Activated CD8-positive, alpha-beta T cell treated with anti-CD3 and anti-CD28 coated beads for 36 hours (primary cell): ENCODE measurements at regions of chr2 and their contacts with region 1.

Region 1: GRCh38 chr2:236180831-236181453 is 12.8 kb upstream of the GBX2 start:
- DNase-seq: peak; percentile 65
- ATAC-seq: no peak
- H3K4me3 Mint-ChIP-seq: no peak overlapping the region
- H3K27ac Mint-ChIP-seq: no peak overlapping the region
- H3K4me1 Mint-ChIP-seq: peaks cover 3% of the 10 kb centered on the region
- H3K27me3 Mint-ChIP-seq: peaks cover 61% of the 10 kb centered on the region
- CTCF ChIP-seq: peak; percentile 94

Region 2: DNA sequence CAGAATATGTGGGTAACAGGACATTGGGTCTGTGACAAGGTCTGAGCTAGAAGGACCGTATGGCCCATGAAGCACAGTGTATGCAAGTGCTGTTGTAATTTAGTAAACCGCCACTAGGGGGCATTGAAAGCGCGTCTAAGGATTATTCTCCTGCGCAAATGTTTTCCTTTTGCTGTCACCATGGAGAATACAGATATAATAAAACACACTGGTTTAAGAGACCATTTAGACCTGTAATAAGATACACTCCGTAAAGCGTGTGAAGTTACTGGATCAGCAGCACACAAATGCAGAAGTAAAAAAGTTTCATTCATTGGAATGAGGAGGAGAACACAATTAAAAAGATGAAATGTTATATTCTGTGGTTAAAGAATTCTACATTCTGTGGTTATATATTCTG is 414.7 kb before region 1 on chr2:
- CTCF ChIA-PET with region 1: interaction called, 14 read pairs
- POLR2A ChIA-PET with region 1: no interaction called
- intact Hi-C with region 1: no loop called
- DNase-seq: peak; percentile 59
- ATAC-seq: peak; percentile 74
- H3K4me3 Mint-ChIP-seq: no peak overlapping the region
- H3K27ac Mint-ChIP-seq: no peak overlapping the region
- H3K4me1 Mint-ChIP-seq: peaks cover 4% of the 10 kb centered on the region
- H3K27me3 Mint-ChIP-seq: no peaks in the 10 kb centered on the region
- CTCF ChIP-seq: peak; percentile 96

Region 3: GRCh38 chr2:235779444-235779896 is 401.5 kb before region 1 on chr2:
- CTCF ChIA-PET with region 1: interaction called, 49 read pairs
- POLR2A ChIA-PET with region 1: no interaction called
- intact Hi-C with region 1: loop called (anchors 2 kb)
- DNase-seq: peak; percentile 83
- ATAC-seq: peak; percentile 71
- H3K4me3 Mint-ChIP-seq: no peak overlapping the region
- H3K27ac Mint-ChIP-seq: no peak overlapping the region
- H3K4me1 Mint-ChIP-seq: no peaks in the 10 kb centered on the region
- H3K27me3 Mint-ChIP-seq: peaks cover 11% of the 10 kb centered on the region
- CTCF ChIP-seq: peak; percentile 76

Region 4: DNA sequence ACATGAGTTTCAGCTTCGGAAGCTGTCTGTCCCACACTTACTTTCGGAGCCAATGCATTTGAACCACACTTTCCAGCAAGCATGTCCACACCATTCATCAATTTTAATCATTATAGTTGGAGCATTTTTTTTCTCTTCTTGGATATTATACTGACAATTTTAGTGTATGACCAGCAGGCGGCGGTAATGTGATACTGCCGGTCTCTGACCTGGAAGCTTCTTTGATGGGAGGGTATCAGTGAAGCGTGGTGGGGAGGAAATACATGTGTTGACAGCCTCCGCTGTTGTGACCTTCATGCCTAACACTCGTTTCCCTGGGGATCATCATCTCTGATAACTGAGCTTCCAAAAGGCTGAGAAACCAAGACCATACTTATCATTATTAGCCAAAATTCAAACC is 244.4 kb before region 1 on chr2:
- CTCF ChIA-PET with region 1: interaction called, 6 read pairs
- POLR2A ChIA-PET with region 1: no interaction called
- intact Hi-C with region 1: loop called (anchors 10 kb)
- DNase-seq: peak; percentile 12
- ATAC-seq: no peak
- H3K4me3 Mint-ChIP-seq: no peak overlapping the region
- H3K27ac Mint-ChIP-seq: no peak overlapping the region
- H3K4me1 Mint-ChIP-seq: no peaks in the 10 kb centered on the region
- H3K27me3 Mint-ChIP-seq: peaks cover under 1% of the 10 kb centered on the region
- CTCF ChIP-seq: peak; percentile 57

Region 5: DNA sequence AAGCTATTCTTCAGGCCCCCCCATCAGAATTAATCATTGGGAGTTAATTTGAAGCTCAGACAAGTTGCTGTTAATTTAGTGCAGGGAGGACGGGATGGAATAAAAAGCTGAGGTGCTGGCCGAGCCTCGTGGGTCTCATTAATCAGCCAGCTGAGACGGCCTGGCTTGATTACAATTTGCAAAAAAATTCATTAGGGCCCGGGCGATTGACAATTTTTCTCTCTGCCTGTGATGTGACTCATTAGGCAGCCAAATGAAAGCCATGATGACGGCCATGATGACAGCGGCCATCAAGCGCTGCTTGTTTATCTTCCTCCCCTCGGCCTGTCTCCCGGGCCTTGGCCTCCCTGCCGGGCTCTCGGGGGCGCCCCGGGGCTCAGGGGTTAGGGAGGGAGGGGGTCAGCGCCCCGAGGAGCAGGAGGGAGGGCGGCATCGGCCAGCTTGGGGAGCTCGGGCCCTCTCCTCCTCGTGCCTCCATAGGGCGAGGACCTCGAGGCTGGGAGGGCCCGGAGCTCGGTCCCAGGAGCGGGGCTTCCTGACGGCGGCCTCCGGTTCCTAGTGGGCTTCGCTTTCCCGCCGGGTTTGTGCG is 18.0 kb before region 1 on chr2:
- CTCF ChIA-PET with region 1: interaction called, 13 read pairs
- POLR2A ChIA-PET with region 1: interaction called, 3 read pairs
- intact Hi-C with region 1: no loop called
- DNase-seq: no peak
- ATAC-seq: no peak
- H3K4me3 Mint-ChIP-seq: no peak overlapping the region
- H3K27ac Mint-ChIP-seq: no peak overlapping the region
- H3K4me1 Mint-ChIP-seq: peaks cover 13% of the 10 kb centered on the region
- H3K27me3 Mint-ChIP-seq: peaks cover 54% of the 10 kb centered on the region
- CTCF ChIP-seq: no peak

Region 6: GRCh38 chr2:236168110-236169067 is 12.6 kb before region 1 on chr2 and contains the start of gene GBX2:
- CTCF ChIA-PET with region 1: interaction called, 18 read pairs
- POLR2A ChIA-PET with region 1: interaction called, 3 read pairs
- intact Hi-C with region 1: no loop called
- DNase-seq: no peak
- ATAC-seq: no peak
- H3K4me3 Mint-ChIP-seq: no peak within 1 kb of the TSS
- H3K27ac Mint-ChIP-seq: no peak within 1 kb of the TSS
- H3K4me1 Mint-ChIP-seq: peaks cover 13% of the 10 kb centered on the region
- H3K27me3 Mint-ChIP-seq: peaks cover 58% of the 10 kb centered on the region
- CTCF ChIP-seq: no peak
- total RNA-seq, gene GBX2: not detected